T-cell (primary cell): ENCODE measurements at regions of chr15 and their contacts with region 1.

Region 1: GRCh38 chr15:22224241-22224671 is 143.9 kb downstream of the OR4M2 start:
- DNase-seq: peak in 3 of 35 experiments; percentile 0 to 24 (median 21)
- ATAC-seq: no peak
- H3K4me3 ChIP-seq: no peak overlapping the region
- H3K4me3 Mint-ChIP-seq: no peak overlapping the region
- H3K27ac ChIP-seq: no peak overlapping the region
- H3K27ac Mint-ChIP-seq: no peak overlapping the region
- H3K4me1 ChIP-seq: peaks cover 13 to 26% of the 10 kb centered on the region in 2 experiments
- H3K4me1 Mint-ChIP-seq: peaks cover 32 to 38% (median 33%) of the 10 kb centered on the region in 3 donors
- H3K27me3 ChIP-seq: peaks cover 2 to 16% of the 10 kb centered on the region in 2 experiments
- H3K27me3 Mint-ChIP-seq: peaks cover 2 to 4% of the 10 kb centered on the region in 2 donors

Region 2: DNA sequence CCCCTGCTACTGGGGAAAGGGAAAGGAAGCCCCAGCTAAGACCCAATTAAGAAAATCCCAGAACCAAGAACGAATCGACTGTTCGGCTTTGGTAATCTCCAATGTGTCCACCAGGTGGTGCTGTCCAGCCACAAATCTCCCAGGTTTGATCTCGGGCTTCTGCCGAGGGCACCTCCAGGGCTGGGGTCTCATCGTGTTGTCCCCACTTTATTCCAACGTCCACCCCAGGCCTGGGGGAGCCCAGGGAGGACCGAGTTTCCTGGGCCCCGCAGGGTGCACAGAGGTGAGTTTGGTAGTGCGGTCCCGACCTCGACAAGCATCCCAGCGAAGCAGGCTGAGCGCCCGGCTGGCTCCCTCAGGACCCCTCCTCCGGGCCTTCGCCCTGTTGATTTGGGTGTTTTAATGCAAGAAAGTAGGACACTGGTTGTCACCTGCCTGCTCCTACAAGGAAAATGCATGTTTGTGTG is 1867.8 kb before region 1 on chr15:
- CTCF ChIA-PET with region 1: interaction called, 10 to 21 read pairs
- POLR2A ChIA-PET with region 1: no interaction called
- DNase-seq: peak in 33 of 35 experiments; percentile 61 to 94 (median 77)
- ATAC-seq: peak; percentile 72 to 89 (median 74)
- H3K4me3 ChIP-seq: no peak overlapping the region
- H3K4me3 Mint-ChIP-seq: peak overlapping the region in 1 of 3 donors; percentile 38
- H3K27ac ChIP-seq: no peak overlapping the region
- H3K27ac Mint-ChIP-seq: peak overlapping the region in 1 of 2 donors; percentile 45
- H3K4me1 ChIP-seq: peaks cover 0 to 37% of the 10 kb centered on the region in 2 experiments
- H3K4me1 Mint-ChIP-seq: peaks cover 5 to 8% (median 7%) of the 10 kb centered on the region in 3 donors
- H3K27me3 ChIP-seq: peaks cover 3 to 38% of the 10 kb centered on the region in 2 experiments
- H3K27me3 Mint-ChIP-seq: peaks cover 0 to 4% of the 10 kb centered on the region in 2 donors

Region 3: GRCh38 chr15:20665641-20666040 is 1558.6 kb before region 1 on chr15:
- CTCF ChIA-PET with region 1: interaction called in 1 of 2 experiments, 11 read pairs
- POLR2A ChIA-PET with region 1: no interaction called
- DNase-seq: no peak
- ATAC-seq: no peak
- H3K4me3 ChIP-seq: no peak overlapping the region
- H3K4me3 Mint-ChIP-seq: no peak overlapping the region
- H3K27ac ChIP-seq: no peak overlapping the region
- H3K27ac Mint-ChIP-seq: no peak overlapping the region
- H3K4me1 ChIP-seq: no peaks in the 10 kb centered on the region
- H3K4me1 Mint-ChIP-seq: no peaks in the 10 kb centered on the region
- H3K27me3 ChIP-seq: peaks cover 2 to 4% of the 10 kb centered on the region in 2 experiments
- H3K27me3 Mint-ChIP-seq: peaks cover 0 to 2% of the 10 kb centered on the region in 2 donors